Natural killer cell (primary cell): ENCODE measurements at regions of chr13 and their contacts with region 1.

Region 1: DNA sequence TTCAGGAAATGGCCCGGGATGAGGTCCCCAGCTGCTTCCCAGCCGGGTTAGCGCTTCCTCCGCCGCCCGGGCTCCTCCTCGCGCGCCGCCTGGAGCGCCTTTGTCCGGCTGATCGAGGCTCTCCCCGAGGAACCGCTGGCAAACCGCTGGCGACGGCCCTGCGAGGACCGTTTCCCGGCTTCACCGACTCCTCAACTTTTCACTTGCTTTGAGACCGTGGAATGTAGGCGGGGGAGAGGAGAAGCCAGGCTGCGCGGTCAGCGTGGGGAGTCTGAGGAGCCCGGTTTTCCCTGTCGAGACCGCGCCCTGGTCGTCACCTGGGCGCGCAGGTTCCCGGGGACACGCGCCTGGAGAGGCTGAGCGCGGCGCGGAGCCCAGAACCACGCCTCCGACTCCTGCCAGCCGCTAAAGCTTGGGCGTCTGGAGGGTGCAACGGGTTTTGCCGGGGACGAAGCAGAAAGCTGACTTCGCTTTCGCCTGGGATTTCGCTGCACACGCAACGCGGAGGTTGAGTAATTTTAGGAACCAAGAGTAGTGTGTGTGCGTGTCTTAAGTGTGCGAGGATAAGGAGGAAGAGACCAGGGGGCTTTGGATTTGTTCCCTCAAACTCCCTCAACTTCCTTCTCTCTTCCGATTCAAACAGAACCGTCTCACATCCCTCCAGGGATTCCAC is 7.3 kb upstream of the DGKH start:
- DNase-seq: peak in 1 of 2 donors; percentile 62
- ATAC-seq: no peak
- H3K4me3 ChIP-seq: peak overlapping the region; percentile 62
- H3K4me3 Mint-ChIP-seq: peak overlapping the region; percentile 94
- H3K27ac ChIP-seq: no peak overlapping the region
- H3K27ac Mint-ChIP-seq: peak overlapping the region; percentile 45 to 76
- H3K4me1 ChIP-seq: peaks cover 19% of the 10 kb centered on the region
- H3K4me1 Mint-ChIP-seq: peaks cover 20 to 24% of the 10 kb centered on the region in 2 donors
- H3K27me3 ChIP-seq: peaks cover 12% of the 10 kb centered on the region
- H3K27me3 Mint-ChIP-seq: peaks cover 24 to 50% of the 10 kb centered on the region in 2 donors
- CTCF ChIP-seq: no peak

Region 2: DNA sequence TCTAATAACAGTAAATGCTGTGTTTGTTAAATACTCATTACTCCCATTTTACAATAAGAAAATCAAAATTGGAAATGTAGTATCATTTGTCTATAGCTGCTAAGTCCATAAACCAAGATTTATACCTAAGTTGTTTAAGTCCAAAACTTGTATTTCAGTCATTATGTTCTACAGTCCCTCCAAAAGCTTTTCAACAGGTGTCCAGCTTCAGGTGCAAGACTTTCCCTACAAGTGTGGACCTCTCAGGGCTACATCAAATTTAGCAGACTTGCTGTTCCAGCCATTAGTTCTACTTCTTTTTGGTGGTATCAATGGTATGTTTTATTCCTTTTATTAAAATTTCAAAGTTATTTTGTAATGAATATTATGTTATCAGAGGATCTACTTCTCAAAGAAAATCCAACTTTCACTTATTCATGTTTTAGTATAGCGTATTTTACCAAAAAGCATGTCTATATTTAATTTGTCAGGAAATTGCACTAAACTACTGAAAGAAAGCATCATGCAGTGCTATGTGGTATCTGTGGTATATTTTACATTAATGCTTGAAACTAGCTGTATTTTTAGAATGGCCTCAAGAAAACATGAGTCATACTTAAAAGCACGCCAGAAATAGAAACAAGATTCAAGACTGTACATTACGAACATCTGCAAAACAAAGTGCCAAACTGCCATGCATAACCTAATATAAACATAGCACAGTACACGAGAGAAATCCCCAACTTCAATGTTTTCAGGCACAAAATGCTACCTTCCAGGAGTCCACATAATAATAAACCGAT is 124.8 kb before region 1 on chr13:
- intact Hi-C with region 1: loop called (anchors 1 kb)
- DNase-seq: peak in 1 of 2 donors; percentile 40
- ATAC-seq: peak; percentile 76 to 88 (median 85)
- H3K4me3 ChIP-seq: no peak overlapping the region
- H3K4me3 Mint-ChIP-seq: no peak overlapping the region
- H3K27ac ChIP-seq: no peak overlapping the region
- H3K27ac Mint-ChIP-seq: peak overlapping the region; percentile 21 to 79
- H3K4me1 ChIP-seq: peaks cover 2% of the 10 kb centered on the region
- H3K4me1 Mint-ChIP-seq: peaks cover 22 to 43% of the 10 kb centered on the region in 2 donors
- H3K27me3 ChIP-seq: no peaks in the 10 kb centered on the region
- H3K27me3 Mint-ChIP-seq: no peaks in the 10 kb centered on the region
- CTCF ChIP-seq: no peak